Activated naive CD4-positive, alpha-beta T cell treated with anti-CD3 and anti-CD28 coated beads for 36 hours (primary cell): ENCODE measurements at regions of chr7 and their contacts with region 1.

Region 1: GRCh38 chr7:43658718-43659548 is 70.4 kb downstream of the COA1 start:
- DNase-seq: peak; percentile 74
- H3K4me3 Mint-ChIP-seq: peak overlapping the region; percentile 28
- H3K27ac Mint-ChIP-seq: peak overlapping the region; percentile 96
- H3K4me1 Mint-ChIP-seq: peaks cover 65% of the 10 kb centered on the region
- H3K27me3 Mint-ChIP-seq: no peaks in the 10 kb centered on the region

Region 2: GRCh38 chr7:43669286-43670081 is 10.6 kb after region 1 on chr7:
- CTCF ChIA-PET with region 1: no interaction called
- intact Hi-C with region 1: loop called (anchors 1 kb)
- DNase-seq: peak; percentile 90
- H3K4me3 Mint-ChIP-seq: peak overlapping the region; percentile 71
- H3K27ac Mint-ChIP-seq: peak overlapping the region; percentile 96
- H3K4me1 Mint-ChIP-seq: peaks cover 87% of the 10 kb centered on the region
- H3K27me3 Mint-ChIP-seq: no peaks in the 10 kb centered on the region